Naive thymus-derived CD4-positive, alpha-beta T cell (primary cell): ENCODE measurements at regions of chr2 and their contacts with region 1.

Region 1: GRCh38 chr2:61694312-61695274 is 156.4 kb upstream of the XPO1 start:
- DNase-seq: peak; percentile 62 to 91 (median 77)
- ATAC-seq: peak; percentile 99
- H3K4me3 ChIP-seq: peak overlapping the region; percentile 74
- H3K4me3 Mint-ChIP-seq: peak overlapping the region; percentile 84 to 96 (median 91)
- H3K27ac ChIP-seq: peak overlapping the region; percentile 62
- H3K27ac Mint-ChIP-seq: peak overlapping the region; percentile 74 to 92 (median 87)
- H3K4me1 ChIP-seq: peaks cover 0 to 5% of the 10 kb centered on the region in 2 donors
- H3K4me1 Mint-ChIP-seq: peaks cover 4 to 19% (median 15%) of the 10 kb centered on the region in 7 donors
- H3K27me3 ChIP-seq: no peaks in the 10 kb centered on the region
- H3K27me3 Mint-ChIP-seq: peaks cover 0 to 4% (median 0%) of the 10 kb centered on the region in 5 donors

Region 2: DNA sequence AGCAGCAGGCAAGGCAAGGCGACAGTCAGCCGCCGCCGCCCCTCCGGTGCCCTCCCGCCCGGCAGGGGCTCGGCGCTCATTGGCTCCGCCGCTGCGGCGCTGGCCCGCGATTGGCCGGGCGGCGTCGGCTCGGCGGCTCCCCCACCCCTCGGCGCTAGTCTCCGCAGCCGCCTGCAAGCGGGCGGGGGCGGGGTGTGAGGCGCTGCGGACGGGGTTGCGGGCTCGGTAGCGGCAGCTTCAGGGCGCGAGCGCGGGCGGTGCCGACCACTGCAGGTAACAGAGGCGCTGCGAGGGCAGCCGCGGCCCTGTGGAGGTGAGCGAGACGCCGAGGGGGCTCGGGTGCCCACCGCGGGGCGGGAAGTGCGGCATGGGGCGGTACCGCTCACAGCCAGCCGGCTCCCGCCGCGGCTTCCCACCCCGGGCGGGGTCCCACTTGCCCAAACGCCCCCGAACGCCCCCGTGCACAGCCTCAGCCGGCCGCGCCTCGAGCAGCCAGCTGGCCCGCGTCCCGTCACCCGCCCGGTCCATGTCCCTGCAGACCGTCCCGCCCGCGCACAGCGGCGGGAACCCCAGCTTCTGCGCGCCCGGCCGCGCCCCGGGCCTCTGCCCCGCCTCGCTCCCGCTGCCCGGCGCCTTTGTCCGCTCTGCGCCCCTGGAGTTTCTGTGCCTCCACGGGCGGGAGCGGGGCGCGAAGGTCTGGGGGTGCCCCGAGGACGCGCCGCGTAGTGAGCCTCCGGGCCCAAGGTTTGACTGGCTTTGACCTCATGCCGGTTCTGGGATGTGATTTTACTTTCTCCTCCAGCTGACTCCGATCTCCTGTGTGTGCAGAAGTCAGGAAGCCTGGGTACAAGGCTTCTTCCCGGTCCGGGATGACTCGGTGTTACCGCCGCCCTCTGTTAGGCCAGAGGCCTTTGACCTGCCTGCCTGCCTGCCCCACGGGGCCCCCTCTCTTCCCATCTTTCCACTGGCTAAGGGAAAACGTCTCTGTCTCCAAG is 628.6 kb before region 1 on chr2 and contains the start of gene SANBR:
- CTCF ChIA-PET with region 1: no interaction called
- POLR2A ChIA-PET with region 1: no interaction called
- intact Hi-C with region 1: loop called in 1 of 2 experiments (anchors 10 kb)
- DNase-seq: peak; percentile 78 to 90 (median 83)
- ATAC-seq: peak; percentile 99
- H3K4me3 ChIP-seq: peak within 1 kb of the TSS; percentile 59
- H3K4me3 Mint-ChIP-seq: peak within 1 kb of the TSS; percentile 79 to 98 (median 95)
- H3K27ac ChIP-seq: peak within 1 kb of the TSS; percentile 49
- H3K27ac Mint-ChIP-seq: peak within 1 kb of the TSS; percentile 12 to 94 (median 79)
- H3K4me1 ChIP-seq: peaks cover 0 to 6% of the 10 kb centered on the region in 2 donors
- H3K4me1 Mint-ChIP-seq: peaks cover 0 to 17% (median 5%) of the 10 kb centered on the region in 7 donors
- H3K27me3 ChIP-seq: no peaks in the 10 kb centered on the region
- H3K27me3 Mint-ChIP-seq: peaks cover 0 to 2% (median 0%) of the 10 kb centered on the region in 5 donors
- total RNA-seq, gene SANBR: 2.0 to 5.9 (median 3.6) TPM

Region 3: DNA sequence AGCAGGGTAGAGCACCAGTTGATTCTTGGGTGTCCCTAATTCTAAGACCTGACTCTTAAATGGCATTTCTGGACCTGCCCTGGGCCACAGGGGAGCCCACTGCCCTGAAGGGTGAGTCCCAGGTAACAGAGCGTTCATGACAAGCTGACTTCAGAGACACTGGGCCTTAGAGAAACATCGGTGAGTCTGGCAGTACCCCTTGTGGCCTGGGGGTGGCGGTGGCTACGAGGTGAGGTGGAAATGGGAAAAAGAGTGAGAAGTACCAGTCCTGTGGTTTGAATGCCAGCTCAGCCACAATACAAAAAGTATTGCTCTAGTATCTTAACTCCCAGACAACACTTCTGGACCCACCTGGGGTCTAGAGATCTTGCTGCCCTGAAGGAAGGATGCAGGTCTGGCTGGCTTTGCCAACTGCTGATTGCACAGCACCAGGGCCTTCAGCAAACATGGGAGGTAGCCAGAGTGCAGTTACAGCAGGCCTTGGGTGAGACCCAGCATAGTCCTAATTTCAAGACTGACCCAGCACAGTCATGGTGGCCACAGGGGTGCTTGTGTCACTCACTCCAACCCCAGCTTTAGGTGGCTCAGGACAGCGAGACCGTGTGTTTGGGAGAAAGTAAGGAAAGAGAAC is 268.2 kb before region 1 on chr2:
- CTCF ChIA-PET with region 1: no interaction called
- POLR2A ChIA-PET with region 1: no interaction called
- intact Hi-C with region 1: loop called in 1 of 2 experiments (anchors 1 kb)
- DNase-seq: peak; percentile 54 to 80 (median 73)
- ATAC-seq: peak; percentile 94
- H3K4me3 ChIP-seq: no peak overlapping the region
- H3K4me3 Mint-ChIP-seq: peak overlapping the region in 9 of 10 donors; percentile 16 to 78 (median 58)
- H3K27ac ChIP-seq: peak overlapping the region; percentile 72
- H3K27ac Mint-ChIP-seq: peak overlapping the region; percentile 65 to 99 (median 95)
- H3K4me1 ChIP-seq: peaks cover 11 to 34% of the 10 kb centered on the region in 2 donors
- H3K4me1 Mint-ChIP-seq: peaks cover 46 to 84% (median 71%) of the 10 kb centered on the region in 7 donors
- H3K27me3 ChIP-seq: no peaks in the 10 kb centered on the region
- H3K27me3 Mint-ChIP-seq: no peaks in the 10 kb centered on the region

Region 4: GRCh38 chr2:61529944-61530735 is 164.5 kb before region 1 on chr2:
- CTCF ChIA-PET with region 1: no interaction called
- POLR2A ChIA-PET with region 1: no interaction called
- intact Hi-C with region 1: no loop called
- DNase-seq: no peak
- ATAC-seq: no peak
- H3K4me3 ChIP-seq: no peak overlapping the region
- H3K4me3 Mint-ChIP-seq: peak overlapping the region in 3 of 10 donors; percentile 5 to 29 (median 18)
- H3K27ac ChIP-seq: no peak overlapping the region
- H3K27ac Mint-ChIP-seq: peak overlapping the region in 5 of 9 donors; percentile 6 to 88 (median 48)
- H3K4me1 ChIP-seq: peaks cover 18 to 25% of the 10 kb centered on the region in 2 donors
- H3K4me1 Mint-ChIP-seq: peaks cover 26 to 86% (median 64%) of the 10 kb centered on the region in 7 donors
- H3K27me3 ChIP-seq: no peaks in the 10 kb centered on the region
- H3K27me3 Mint-ChIP-seq: no peaks in the 10 kb centered on the region

Region 5: DNA sequence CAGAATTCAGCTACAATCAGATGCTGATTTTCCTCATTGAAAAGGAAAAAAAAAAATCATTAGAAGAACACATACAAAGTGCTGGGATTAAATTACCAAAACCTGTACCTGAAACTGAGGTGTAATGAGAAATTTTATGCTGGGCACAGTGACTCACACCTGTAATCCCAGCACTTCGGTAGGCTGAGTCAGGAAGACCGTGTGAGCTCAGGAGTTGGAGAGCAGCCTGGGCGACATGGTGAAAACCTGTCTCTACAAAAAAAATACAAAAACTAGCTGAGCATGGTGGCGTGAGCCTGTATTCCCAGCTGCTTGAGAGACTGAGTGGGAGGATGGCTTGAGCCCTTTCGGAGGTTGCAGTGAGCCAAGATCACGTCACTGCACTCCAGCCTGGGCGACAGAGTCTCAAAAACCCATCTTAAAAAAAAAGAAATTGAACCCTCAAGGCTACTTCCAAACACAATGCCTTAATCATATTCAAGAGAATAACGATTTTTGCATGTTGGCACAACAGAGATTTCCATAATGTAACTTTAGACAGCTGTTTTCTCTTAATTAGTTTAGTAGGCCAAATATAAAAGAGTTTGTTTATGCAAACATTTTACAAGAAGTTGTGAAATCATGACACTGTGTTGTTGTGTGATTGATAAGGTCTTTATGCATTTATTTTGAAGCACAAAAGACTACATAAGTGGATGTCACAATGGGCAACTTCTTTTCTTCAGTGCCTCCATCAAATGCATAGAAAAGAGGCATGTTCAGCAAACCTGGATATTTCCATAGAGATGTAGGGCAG is 95.4 kb after region 1 on chr2:
- CTCF ChIA-PET with region 1: no interaction called
- POLR2A ChIA-PET with region 1: no interaction called
- intact Hi-C with region 1: loop called in 1 of 2 experiments (anchors 1 kb)
- DNase-seq: no peak
- ATAC-seq: no peak
- H3K4me3 ChIP-seq: no peak overlapping the region
- H3K4me3 Mint-ChIP-seq: no peak overlapping the region
- H3K27ac ChIP-seq: no peak overlapping the region
- H3K27ac Mint-ChIP-seq: no peak overlapping the region
- H3K4me1 ChIP-seq: no peaks in the 10 kb centered on the region
- H3K4me1 Mint-ChIP-seq: peaks cover 0 to 8% (median 4%) of the 10 kb centered on the region in 7 donors
- H3K27me3 ChIP-seq: no peaks in the 10 kb centered on the region
- H3K27me3 Mint-ChIP-seq: peaks cover 3 to 17% (median 7%) of the 10 kb centered on the region in 5 donors